ENCODE measurements at regions of chr14 and their contacts with region 1.

Region 1: GRCh38 chr14:92373336-92373735 is 50.4 kb downstream of the SLC24A4 start:
- H3K4me3 Mint-ChIP-seq: no peak overlapping the region
- H3K27ac Mint-ChIP-seq: no peak overlapping the region
- H3K4me1 Mint-ChIP-seq: peaks cover 10% of the 10 kb centered on the region
- H3K27me3 Mint-ChIP-seq: peaks cover 7% of the 10 kb centered on the region

Region 2: DNA sequence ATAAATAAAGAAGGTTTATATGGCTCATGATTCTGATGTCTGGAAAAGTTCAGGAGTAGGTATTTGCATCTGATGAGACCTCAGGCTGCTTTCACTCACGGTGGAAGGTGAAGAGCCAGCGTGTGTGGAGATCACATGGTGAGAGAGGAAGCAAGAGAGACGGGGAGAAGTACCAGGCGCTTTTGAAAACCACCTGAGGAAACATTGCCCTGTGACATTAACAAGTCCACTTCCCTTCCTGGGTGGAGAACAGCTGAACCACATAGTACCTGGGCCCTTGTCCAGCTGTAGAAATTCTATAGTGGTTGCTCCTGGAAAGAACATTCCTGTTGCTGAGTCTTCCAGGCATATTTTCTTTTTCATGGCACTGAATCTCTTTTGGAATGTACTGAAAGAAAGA is 52.9 kb after region 1 on chr14:
- intact Hi-C with region 1: loop called (anchors 10 kb)
- H3K4me3 Mint-ChIP-seq: no peak overlapping the region
- H3K27ac Mint-ChIP-seq: no peak overlapping the region
- H3K4me1 Mint-ChIP-seq: peaks cover 29% of the 10 kb centered on the region
- H3K27me3 Mint-ChIP-seq: peaks cover 3% of the 10 kb centered on the region

Measured in dendritic cell treated with granulocyte-macrophage colony-stimulating factor and Interleukin-4, amounts not matched to agents 40 ng/mL and 50 ng/mL, for 4 days (primary cell).